Motor neuron (in vitro differentiated cells): ENCODE measurements at regions of chr16 and their contacts with region 1.

Region 1: DNA sequence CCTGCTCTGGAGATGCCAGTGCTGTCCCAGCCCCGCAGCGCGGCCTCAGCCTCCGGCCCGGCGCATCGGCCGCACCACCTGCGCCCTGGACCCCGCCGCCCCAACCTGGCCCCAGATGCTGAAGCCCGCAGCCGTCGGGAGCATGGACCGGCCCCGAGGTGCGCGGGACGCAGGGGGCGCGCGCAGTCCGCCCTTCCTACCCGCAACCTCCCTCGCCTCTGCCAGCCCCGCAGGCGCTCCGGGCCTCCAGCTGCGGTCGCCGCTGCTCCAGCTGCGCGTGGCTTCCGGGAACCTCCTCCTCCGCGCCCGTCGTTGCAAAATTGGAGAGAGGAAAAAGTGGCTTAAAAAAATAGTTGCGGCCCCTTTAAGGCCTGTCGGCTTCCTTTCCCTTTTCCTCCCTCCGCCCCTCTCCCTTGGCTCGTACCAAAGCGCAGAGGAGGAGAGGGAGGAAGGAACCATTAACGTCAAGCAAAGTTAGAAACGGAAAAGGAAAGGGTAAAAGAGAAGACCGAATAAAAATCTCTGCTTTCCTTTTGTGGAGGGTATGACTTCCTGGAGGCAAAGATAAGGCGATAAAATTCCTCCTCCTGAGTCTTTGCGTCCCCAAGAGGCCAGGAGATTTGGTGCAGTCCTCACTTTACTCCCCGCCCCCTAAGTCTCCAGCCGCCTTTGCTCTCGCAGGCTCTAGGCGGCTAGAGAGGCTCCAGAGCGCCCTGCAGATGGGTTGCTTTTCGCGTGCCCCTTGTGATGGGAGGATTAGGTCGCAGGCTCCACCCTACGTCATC is at the start of gene CDIPT:
- ATAC-seq: peak; percentile 94 to 98 (median 96)
- H3K4me3 ChIP-seq: peak within 1 kb of the TSS; percentile 77 to 83 (median 81)
- H3K27ac ChIP-seq: peak within 1 kb of the TSS; percentile 98 to 99
- H3K4me1 ChIP-seq: peaks cover 9 to 12% of the 10 kb centered on the region in 2 donors
- total RNA-seq, gene CDIPT: 38.1 to 64.9 (median 44.0) TPM

Region 2: DNA sequence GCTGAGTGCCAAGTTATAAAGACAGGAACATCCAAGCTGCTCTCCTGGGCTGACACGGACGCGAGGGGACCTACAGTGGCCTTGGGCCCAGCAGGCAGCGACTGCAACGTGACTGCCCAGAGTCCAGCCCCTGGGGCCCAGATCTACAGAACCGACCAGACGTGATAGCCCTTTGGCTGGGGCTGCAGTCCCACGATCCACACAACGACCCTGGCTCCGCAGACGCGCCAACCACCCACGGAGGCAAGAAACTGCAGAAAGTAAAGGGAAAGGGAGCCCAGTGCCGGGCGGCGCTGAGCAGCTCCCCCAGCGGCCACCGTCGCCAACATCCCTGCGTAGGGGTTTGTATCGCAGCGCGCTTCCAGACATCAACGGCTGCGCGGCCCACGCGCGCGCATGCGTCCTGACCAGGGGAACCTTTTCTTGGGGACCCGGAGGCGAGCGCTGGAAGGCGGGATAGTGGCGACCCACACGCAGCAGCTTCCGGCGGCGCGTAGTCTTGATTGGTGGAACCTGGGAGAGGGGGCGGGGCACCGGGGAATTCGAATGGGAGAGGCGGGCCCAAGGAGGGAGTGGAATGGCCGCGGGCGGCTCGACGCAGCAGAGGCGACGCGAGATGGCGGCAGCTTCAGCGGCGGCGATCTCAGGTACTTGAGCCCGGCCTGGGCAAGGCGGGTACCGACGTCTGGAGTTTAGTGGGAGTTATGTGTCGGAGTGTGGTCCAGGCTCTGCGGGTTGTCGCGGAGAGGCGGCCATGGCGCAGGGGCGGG is 72.7 kb before region 1 on chr16 and contains the start of gene KIF22:
- in situ Hi-C with region 1: no loop called
- ATAC-seq: peak; percentile 92 to 99 (median 96)
- H3K4me3 ChIP-seq: peak within 1 kb of the TSS; percentile 56 to 88 (median 76)
- H3K27ac ChIP-seq: peak within 1 kb of the TSS; percentile 75 to 89
- H3K4me1 ChIP-seq: peaks cover 6 to 10% of the 10 kb centered on the region in 2 donors
- total RNA-seq, gene KIF22: 16.1 to 96.3 (median 24.4) TPM

Region 3: GRCh38 chr16:29961479-29962343 is 98.6 kb after region 1 on chr16 and contains the start of gene TMEM219:
- in situ Hi-C with region 1: loop called in 1 of 9 experiments (anchors 25 kb)
- ATAC-seq: peak; percentile 90 to 97 (median 94)
- H3K4me3 ChIP-seq: peak within 1 kb of the TSS; percentile 43 to 69 (median 52)
- H3K27ac ChIP-seq: peak within 1 kb of the TSS in 1 of 2 donors; percentile 57
- H3K4me1 ChIP-seq: peaks cover 0 to 8% of the 10 kb centered on the region in 2 donors
- total RNA-seq, gene TMEM219: 34.4 to 77.6 (median 56.2) TPM